ENCODE measurements at regions of chr3 and their contacts with region 1.

Region 1: GRCh38 chr3:133494469-133494868 is 79.0 kb upstream of the CDV3 start:
- DNase-seq: peak; percentile 73
- ATAC-seq: peak; percentile 78
- H3K4me3 Mint-ChIP-seq: no peak overlapping the region
- H3K27ac Mint-ChIP-seq: no peak overlapping the region
- H3K4me1 Mint-ChIP-seq: peaks cover 39% of the 10 kb centered on the region
- H3K27me3 Mint-ChIP-seq: no peaks in the 10 kb centered on the region
- CTCF ChIP-seq: peak; percentile 58

Region 2: DNA sequence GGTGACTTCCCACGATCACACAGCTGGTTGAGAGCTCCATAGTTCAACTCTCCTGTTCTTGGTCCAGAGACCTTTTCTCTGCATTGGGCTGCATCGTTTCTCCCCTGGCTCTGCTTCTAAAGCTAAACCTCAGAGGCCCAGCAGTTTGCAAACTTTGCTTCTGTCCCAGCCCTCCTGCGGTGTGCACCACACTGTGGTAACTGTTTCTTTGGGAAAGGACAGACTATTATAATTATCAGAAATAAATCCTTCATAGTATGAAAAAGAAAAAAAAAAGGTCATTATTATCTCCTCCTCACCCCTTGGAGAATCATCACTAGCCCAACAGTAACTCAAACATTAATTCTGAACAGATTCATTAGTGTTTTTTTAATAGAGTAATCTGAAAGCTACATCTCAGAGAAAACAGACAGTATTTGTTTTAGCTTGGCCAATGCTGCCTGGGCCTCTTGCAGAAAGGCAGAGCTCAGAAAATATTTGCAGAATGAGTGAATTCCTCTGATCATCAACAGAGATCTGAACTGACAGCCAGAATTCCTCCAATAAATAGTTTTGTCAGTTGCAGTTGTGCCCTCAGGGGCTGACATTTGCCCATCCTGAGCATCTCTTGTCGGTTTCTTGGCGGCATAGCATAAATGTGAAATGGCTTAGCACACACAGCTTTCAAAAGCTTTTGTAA is 41.7 kb before region 1 on chr3:
- CTCF ChIA-PET with region 1: no interaction called
- POLR2A ChIA-PET with region 1: interaction called, 11 read pairs
- DNase-seq: no peak
- ATAC-seq: peak; percentile 39; the same call in 1 of the 2 replicates
- H3K4me3 Mint-ChIP-seq: no peak overlapping the region
- H3K27ac Mint-ChIP-seq: no peak overlapping the region
- H3K4me1 Mint-ChIP-seq: peaks cover 17% of the 10 kb centered on the region
- H3K27me3 Mint-ChIP-seq: no peaks in the 10 kb centered on the region
- CTCF ChIP-seq: no peak

Region 3: DNA sequence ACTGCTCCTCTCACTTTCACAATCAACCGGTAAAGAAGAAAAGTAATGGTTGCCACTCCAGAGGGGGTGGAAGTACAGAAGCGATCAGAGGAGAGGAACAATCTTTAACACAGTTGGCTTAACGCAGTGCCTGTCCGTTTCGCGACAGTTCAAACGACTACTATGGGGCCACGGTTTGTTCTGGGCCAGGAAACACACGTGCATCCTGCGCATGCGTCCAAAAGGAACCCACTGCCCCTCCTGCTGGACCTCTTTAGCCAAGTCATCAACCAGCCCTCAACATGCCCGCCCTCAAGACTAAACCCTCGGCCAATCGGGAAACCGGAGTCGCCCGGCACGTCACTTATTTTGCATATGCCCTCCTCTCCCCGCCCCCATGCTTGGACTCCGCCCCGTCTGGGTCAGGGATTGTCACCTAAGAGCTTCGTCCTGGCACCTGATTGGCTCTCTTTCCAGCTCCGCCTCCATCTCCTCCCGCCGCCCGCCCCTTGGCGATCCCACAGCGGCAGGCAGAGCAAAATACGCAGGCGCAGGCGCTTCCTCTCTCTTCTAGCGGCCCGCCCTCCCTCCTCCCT is 78.7 kb after region 1 on chr3:
- CTCF ChIA-PET with region 1: interaction called, 23 read pairs
- POLR2A ChIA-PET with region 1: interaction called, 5 read pairs
- DNase-seq: peak; percentile 100
- ATAC-seq: peak; percentile 93
- H3K4me3 Mint-ChIP-seq: peak overlapping the region; percentile 68
- H3K27ac Mint-ChIP-seq: peak overlapping the region; percentile 99
- H3K4me1 Mint-ChIP-seq: peaks cover 36% of the 10 kb centered on the region
- H3K27me3 Mint-ChIP-seq: no peaks in the 10 kb centered on the region
- CTCF ChIP-seq: no peak

Region 4: GRCh38 chr3:133578548-133579191 is 84.2 kb after region 1 on chr3:
- CTCF ChIA-PET with region 1: interaction called, 23 read pairs
- POLR2A ChIA-PET with region 1: interaction called, 3 read pairs
- DNase-seq: no peak
- ATAC-seq: peak; percentile 64
- H3K4me3 Mint-ChIP-seq: no peak overlapping the region
- H3K27ac Mint-ChIP-seq: peak overlapping the region; percentile 82; the same call in 1 of the 2 replicates
- H3K4me1 Mint-ChIP-seq: peaks cover 31% of the 10 kb centered on the region
- H3K27me3 Mint-ChIP-seq: no peaks in the 10 kb centered on the region
- CTCF ChIP-seq: no peak

Region 5: GRCh38 chr3:133691410-133692107 is 197.1 kb after region 1 on chr3:
- CTCF ChIA-PET with region 1: no interaction called
- POLR2A ChIA-PET with region 1: no interaction called
- DNase-seq: no peak
- ATAC-seq: no peak
- H3K4me3 Mint-ChIP-seq: no peak overlapping the region
- H3K27ac Mint-ChIP-seq: no peak overlapping the region
- H3K4me1 Mint-ChIP-seq: no peaks in the 10 kb centered on the region
- H3K27me3 Mint-ChIP-seq: peaks cover 3% of the 10 kb centered on the region; the same call in 1 of the 2 replicates
- CTCF ChIP-seq: no peak